ENCODE measurements at regions of chr17 and their contacts with region 1.

Region 1: GRCh38 chr17:7687908-7688807 is at the start of gene WRAP53:
- DNase-seq: peak; percentile 98
- ATAC-seq: peak; percentile 96
- total RNA-seq, gene WRAP53: 5.6 TPM

Region 2: GRCh38 chr17:7583253-7584109 is 104.7 kb before region 1 on chr17 and contains the start of gene MPDU1:
- intact Hi-C with region 1: loop called (anchors 2 kb)
- DNase-seq: peak; percentile 98
- ATAC-seq: peak; percentile 87
- total RNA-seq, gene MPDU1: 32.0 TPM

Region 3: DNA sequence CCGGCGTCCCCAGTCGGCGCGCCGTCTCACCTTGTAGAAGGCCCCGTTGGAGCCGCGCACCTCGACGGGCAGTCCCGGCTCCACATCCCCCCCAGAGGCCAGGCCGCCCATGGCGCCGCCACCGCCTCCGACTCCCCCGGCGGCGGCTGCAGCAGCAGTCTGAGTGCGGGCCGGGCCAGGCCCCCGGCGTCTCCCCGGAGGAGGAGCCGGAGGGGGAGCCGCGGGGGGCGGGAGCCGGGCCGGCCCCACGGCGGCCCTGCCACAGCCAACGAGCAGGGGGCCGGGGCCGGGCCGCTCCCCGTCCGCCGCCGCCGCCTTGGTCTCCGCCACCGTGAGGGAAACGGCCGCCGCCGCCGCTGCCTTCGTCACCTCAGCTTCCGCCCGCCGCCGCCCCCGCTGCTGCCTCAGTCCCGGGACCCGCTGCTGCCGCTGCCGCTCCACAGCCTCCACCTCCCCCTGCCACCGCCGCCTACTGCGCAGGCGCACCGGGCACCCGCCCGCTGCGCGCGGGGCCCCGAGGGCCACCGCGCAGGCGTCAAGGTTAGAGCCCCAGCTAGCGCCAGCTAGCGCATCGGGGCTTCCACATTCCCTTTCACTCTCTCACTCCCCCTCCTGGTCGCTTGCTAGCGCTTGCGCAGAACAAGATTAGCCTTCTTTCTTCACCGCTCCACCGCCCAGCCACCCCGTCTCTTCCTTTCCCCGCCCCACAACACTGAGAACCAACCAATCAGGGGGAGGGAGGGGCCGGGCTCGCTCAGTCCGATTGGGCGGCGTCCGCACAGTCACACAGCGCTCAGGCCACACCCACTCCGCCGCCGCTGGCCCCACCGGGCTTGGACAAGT is 73.5 kb before region 1 on chr17 and contains the start of gene FXR2:
- intact Hi-C with region 1: loop called (anchors 1 kb)
- DNase-seq: peak; percentile 100
- ATAC-seq: peak; percentile 99
- total RNA-seq, gene FXR2: 103 TPM

Region 4: DNA sequence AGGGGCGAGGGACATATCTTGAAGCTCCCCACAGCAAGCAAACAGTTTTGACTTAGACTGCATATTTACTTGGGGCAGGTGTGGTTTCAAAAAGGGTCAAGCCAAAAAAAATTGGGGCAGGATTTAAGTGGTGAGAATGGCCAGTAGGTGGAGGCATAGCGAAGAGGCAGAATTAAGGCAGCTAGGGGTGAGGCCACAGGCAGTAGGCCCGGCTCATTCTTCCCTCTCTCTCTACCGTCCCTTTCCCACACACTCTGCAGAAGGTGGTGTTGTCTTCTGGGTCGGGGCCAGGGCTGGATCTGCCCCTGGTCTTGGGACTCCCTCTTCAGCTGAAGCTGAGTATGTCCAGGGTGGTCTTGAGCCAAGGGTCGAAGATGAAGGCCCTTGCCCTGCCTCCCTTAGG is 55.7 kb before region 1 on chr17:
- intact Hi-C with region 1: loop called (anchors 1 kb)
- DNase-seq: no peak
- ATAC-seq: no peak

Region 5: GRCh38 chr17:7650509-7651096 is 37.6 kb before region 1 on chr17 and contains the start of gene ATP1B2:
- intact Hi-C with region 1: loop called (anchors 5 kb)
- DNase-seq: peak; percentile 90
- ATAC-seq: peak; percentile 87
- total RNA-seq, gene ATP1B2: 3.8 TPM